Activated CD4-positive, alpha-beta T cell treated with anti-CD3 and anti-CD28 coated beads for 36 hours (primary cell): ENCODE measurements at regions of chr12 and their contacts with region 1.

Region 1: DNA sequence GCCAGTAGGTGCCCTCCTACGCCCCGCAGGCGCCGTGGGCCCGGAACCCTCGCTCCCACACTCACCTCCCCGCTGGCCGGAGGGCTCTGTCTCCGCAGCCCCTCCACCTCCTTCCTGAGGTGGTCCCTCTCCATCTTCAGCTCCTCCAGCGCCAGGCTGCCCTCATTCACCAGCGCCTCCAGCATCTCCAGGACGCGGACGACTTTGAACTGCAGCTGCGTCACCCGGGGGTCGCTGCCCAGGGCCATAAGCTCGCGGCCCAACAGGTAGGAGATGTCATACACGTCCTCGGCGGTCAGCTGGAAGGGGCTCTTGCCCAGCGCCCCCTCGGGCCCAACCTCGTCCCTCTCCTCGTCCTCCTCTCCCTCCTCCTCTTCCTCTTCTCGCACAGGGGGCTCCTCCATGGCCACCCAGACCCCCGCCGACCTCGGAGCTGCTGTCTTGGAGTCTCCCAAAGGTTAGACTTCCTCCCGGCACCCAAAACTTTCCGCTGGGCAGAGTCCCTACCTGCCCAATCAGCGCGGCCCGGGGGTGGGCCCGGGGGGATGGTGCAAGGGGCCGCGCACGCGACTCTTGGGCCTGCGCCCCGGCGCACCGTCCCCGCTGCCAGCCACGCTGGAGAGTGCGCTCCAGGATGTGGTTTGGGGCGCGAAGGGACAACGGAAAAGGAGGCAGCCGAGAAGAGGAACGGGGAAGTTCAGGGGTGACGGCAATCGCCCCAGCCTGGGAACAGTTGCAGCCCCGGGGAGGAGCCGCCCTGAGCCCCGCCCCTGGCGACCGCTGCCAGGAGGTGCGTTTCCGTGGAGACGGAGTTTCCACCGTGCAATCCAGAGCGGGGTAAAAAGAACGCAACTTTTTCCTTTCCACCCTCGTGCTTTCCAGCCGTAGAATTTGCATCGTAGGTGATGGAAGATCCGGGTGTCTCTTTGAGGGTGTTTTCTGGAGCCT is at the start of gene RILPL2:
- DNase-seq: peak; percentile 96
- ATAC-seq: peak; percentile 85
- H3K4me3 Mint-ChIP-seq: peak within 1 kb of the TSS; percentile 95
- H3K27ac Mint-ChIP-seq: peak within 1 kb of the TSS; percentile 98
- H3K4me1 Mint-ChIP-seq: peaks cover 33% of the 10 kb centered on the region
- H3K27me3 Mint-ChIP-seq: no peaks in the 10 kb centered on the region
- total RNA-seq, gene RILPL2: 10.4 to 12.1 TPM

Region 2: GRCh38 chr12:122215771-122216170 is 1220.5 kb before region 1 on chr12:
- CTCF ChIA-PET with region 1: no interaction called
- POLR2A ChIA-PET with region 1: interaction called, 10 read pairs
- intact Hi-C with region 1: no loop called
- DNase-seq: no peak
- ATAC-seq: no peak
- H3K4me3 Mint-ChIP-seq: no peak overlapping the region
- H3K27ac Mint-ChIP-seq: no peak overlapping the region
- H3K4me1 Mint-ChIP-seq: peaks cover 1% of the 10 kb centered on the region
- H3K27me3 Mint-ChIP-seq: no peaks in the 10 kb centered on the region

Region 3: DNA sequence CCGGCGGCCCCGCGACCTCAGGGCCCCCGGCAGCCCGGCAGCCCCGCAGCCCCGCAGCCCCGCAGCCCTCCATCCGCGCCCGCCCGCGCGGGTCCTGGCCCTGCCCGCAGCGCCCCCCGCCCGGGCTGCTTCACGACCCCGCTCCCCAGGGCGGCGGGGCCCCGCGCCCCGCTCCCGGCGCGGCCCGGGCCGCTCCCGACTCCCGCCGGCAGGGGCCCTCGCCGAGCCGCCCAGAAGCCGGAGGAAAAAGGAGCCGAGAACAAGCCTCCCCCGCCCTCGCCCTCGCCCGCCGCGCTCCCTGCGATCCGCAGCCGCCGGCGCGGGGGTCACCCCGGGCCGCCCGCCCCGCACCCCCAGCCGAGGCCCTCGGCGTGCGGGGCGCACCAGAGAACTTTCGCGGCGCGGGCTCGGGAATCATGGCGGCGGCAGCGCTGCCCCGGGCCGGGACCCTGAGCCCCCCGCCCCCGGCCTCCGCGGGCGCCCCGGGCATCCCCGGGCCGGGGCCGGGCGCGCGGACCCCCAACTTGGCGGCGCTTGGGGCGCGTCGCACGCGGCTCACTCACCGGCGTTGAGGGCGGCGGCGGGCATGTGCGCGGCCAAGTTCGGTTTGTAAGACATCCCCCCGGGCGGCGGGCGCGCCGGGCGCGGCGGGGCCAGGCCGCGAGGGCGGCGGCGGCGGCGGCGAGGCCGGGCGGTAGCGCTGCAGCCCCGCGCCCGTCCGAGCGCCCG is 165.1 kb before region 1 on chr12:
- CTCF ChIA-PET with region 1: no interaction called
- POLR2A ChIA-PET with region 1: no interaction called
- intact Hi-C with region 1: loop called in 1 of 2 experiments (anchors 1 kb)
- DNase-seq: peak; percentile 90
- ATAC-seq: peak; percentile 75
- H3K4me3 Mint-ChIP-seq: peak overlapping the region; percentile 86
- H3K27ac Mint-ChIP-seq: no peak overlapping the region
- H3K4me1 Mint-ChIP-seq: peaks cover 23% of the 10 kb centered on the region
- H3K27me3 Mint-ChIP-seq: no peaks in the 10 kb centered on the region

Region 4: GRCh38 chr12:123388177-123388947 is 47.9 kb before region 1 on chr12:
- CTCF ChIA-PET with region 1: no interaction called
- POLR2A ChIA-PET with region 1: interaction called, 6 read pairs
- intact Hi-C with region 1: loop called (anchors 1 kb)
- DNase-seq: peak; percentile 86
- ATAC-seq: peak; percentile 43
- H3K4me3 Mint-ChIP-seq: peak overlapping the region; percentile 76
- H3K27ac Mint-ChIP-seq: peak overlapping the region; percentile 81
- H3K4me1 Mint-ChIP-seq: peaks cover 35% of the 10 kb centered on the region
- H3K27me3 Mint-ChIP-seq: no peaks in the 10 kb centered on the region

Region 5: DNA sequence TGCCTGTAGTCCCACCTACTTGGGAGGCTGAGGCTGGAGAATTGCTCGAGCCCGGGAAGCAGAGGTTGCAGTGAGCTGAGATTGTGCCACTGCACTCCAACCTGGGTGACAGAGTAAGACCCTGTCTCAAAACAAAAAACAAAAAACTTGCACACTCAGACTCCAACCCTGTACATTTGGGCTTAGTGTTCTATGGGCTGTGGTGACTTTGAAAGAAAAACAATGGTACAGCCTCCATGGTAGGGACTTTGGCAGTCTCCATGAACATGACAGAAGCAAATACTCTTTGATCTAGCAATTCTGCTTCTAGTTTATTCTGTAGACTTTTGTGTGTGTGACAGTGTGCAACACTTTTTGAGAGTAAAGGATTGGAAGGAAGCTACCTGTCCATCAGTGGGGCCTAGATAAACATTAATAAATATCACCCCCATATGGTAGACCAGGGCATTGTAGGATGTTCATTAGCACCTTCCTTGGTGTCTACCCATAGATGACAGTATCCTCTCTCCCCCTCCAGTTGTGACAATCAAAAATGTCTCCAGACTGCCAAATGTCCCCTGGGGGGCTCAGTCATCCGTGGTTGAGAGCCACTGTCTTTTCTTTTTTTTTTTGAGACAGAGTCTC is 32.4 kb after region 1 on chr12:
- CTCF ChIA-PET with region 1: no interaction called
- POLR2A ChIA-PET with region 1: no interaction called
- intact Hi-C with region 1: loop called in 1 of 2 experiments (anchors 5 kb)
- DNase-seq: no peak
- ATAC-seq: peak; percentile 42
- H3K4me3 Mint-ChIP-seq: no peak overlapping the region
- H3K27ac Mint-ChIP-seq: no peak overlapping the region
- H3K4me1 Mint-ChIP-seq: peaks cover 3% of the 10 kb centered on the region
- H3K27me3 Mint-ChIP-seq: no peaks in the 10 kb centered on the region